Endothelial cell of umbilical vein (primary cell): ENCODE measurements at regions of chr1 and their contacts with region 1.

Region 1: GRCh38 chr1:223233410-223234169 is 90.5 kb upstream of the TLR5 start:
- DNase-seq: peak; percentile 91
- H3K4me3 ChIP-seq: no peak overlapping the region
- H3K27ac ChIP-seq: peak overlapping the region; percentile 47
- H3K4me1 ChIP-seq: peaks cover 13% of the 10 kb centered on the region
- H3K27me3 ChIP-seq: no peaks in the 10 kb centered on the region
- CTCF ChIP-seq: no peak
- POLR2A ChIP-seq: no peak

Region 2: DNA sequence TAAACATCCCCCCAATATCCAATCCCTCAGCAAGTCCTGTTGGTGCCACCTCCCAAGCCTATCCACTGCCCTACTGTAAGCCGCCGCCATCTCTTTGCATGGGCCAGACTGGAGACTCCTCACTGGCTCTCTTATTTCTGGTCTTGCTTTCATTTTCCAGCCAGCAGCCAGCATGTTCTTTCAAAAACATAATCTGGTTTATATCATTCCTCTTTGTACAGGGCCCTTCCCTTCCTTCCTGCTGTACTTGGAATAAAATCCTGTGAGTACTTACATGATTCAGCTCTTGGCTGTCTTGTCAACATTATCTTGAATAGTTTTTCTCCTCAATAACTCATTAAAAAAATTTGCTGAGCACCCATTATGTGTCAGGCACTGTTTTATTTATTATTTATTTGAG is 118.7 kb before region 1 on chr1:
- CTCF ChIA-PET with region 1: no interaction called
- POLR2A ChIA-PET with region 1: no interaction called
- dilution Hi-C with region 1: no loop called
- intact Hi-C with region 1: no loop called
- DNase-seq: peak; percentile 81
- H3K4me3 ChIP-seq: no peak overlapping the region
- H3K27ac ChIP-seq: peak overlapping the region; percentile 32
- H3K4me1 ChIP-seq: peaks cover 14% of the 10 kb centered on the region
- H3K27me3 ChIP-seq: no peaks in the 10 kb centered on the region
- CTCF ChIP-seq: no peak
- POLR2A ChIP-seq: peak; percentile 30

Region 3: DNA sequence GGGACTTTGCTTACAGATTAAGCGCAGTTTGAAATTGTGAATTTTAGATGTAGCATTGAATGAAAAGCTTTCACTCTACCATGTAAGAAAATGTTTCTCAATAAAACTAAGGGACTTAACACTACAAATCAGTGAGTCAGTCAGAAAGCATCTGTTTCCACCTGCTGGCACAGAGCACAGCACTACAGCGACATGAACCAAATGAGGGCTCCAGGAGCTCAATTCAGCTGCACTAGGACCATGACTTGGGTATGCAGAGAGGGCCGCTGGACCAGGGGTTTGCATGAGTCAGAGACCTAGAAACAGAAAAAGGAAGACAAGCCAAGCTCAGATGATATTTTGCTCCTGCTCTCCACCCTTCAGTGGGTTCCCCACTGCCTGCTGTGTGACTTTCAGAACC is 125.2 kb after region 1 on chr1:
- CTCF ChIA-PET with region 1: no interaction called
- POLR2A ChIA-PET with region 1: no interaction called
- dilution Hi-C with region 1: no loop called
- intact Hi-C with region 1: loop called (anchors 5 kb)
- DNase-seq: no peak
- H3K4me3 ChIP-seq: no peak overlapping the region
- H3K27ac ChIP-seq: no peak overlapping the region
- H3K4me1 ChIP-seq: no peaks in the 10 kb centered on the region
- H3K27me3 ChIP-seq: peaks cover 15 to 23% of the 10 kb centered on the region in 2 experiments
- CTCF ChIP-seq: no peak
- POLR2A ChIP-seq: no peak